ENCODE measurements at regions of chr6 and their contacts with region 1.

Region 1: DNA sequence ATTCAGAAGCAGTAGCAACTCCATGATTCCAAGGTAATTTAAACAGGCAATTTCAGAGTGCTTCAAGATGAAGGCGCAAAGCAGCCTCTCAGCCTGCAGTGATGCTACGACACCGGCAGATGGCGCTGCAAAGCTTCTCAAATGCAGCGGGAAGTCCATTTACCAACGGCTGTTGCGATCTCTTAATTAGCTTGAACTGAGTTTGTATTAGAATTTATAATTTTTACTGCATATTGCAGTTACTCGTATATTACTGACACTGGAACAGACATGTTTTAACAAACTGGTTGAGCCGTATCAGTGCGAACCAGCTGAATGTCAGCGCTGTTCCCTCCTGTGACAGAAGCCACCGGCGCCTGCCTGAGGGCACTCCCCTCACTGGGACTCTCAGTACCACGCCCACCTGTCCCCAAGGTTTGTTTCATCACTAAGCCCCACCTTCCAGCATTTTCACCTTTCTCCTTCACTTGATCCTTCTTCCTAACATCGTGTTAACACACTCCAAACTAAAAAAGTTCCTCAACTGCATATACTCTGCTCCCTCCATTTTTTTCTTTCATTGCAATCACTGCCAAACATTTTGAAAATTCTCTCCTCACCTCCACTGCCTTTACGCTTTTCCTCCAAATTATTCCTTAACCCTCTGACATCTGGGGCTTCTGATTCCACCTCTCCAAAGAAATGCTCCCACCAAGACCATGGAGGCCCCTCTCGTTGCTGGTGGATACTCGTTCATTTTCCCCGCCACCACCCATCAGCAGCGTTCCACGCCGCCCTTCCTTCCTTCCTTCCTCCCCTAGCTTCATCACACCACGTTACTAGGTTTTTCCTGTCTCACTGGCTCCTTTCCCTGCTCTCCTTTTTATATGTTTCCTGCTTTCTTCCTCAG is 14.5 kb downstream of the GNL1 start:
- DNase-seq: peak; percentile 87
- H3K4me3 Mint-ChIP-seq: peak overlapping the region; percentile 78
- H3K27ac Mint-ChIP-seq: peak overlapping the region; percentile 93
- H3K4me1 Mint-ChIP-seq: peaks cover 37% of the 10 kb centered on the region
- H3K27me3 Mint-ChIP-seq: no peaks in the 10 kb centered on the region

Region 2: DNA sequence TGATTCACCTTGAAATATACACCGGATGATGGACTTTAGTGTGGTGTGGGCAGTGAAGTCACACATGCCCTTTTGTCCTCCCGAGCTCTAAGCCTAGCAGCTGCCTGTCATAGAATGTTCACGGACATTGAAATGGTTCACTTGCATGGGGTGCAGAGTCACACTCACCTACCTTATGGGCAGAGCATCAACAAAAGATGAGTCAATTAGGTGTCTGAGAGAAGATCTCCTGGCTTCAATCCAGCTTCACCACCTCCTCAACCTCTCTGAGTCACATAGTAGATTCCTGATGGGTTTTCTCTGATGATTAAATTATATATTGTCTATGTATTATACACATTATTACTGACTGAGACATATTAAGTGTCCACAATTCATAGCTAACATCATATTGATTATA is 100.6 kb before region 1 on chr6:
- CTCF ChIA-PET with region 1: no interaction called
- DNase-seq: no peak
- H3K4me3 Mint-ChIP-seq: no peak overlapping the region
- H3K27ac Mint-ChIP-seq: no peak overlapping the region
- H3K4me1 Mint-ChIP-seq: no peaks in the 10 kb centered on the region
- H3K27me3 Mint-ChIP-seq: peaks cover 91% of the 10 kb centered on the region

Region 3: GRCh38 chr6:30453508-30454116 is 88.1 kb before region 1 on chr6:
- CTCF ChIA-PET with region 1: interaction called, 12 read pairs
- DNase-seq: peak; percentile 89
- H3K4me3 Mint-ChIP-seq: no peak overlapping the region
- H3K27ac Mint-ChIP-seq: no peak overlapping the region
- H3K4me1 Mint-ChIP-seq: peaks cover 34% of the 10 kb centered on the region
- H3K27me3 Mint-ChIP-seq: peaks cover 96% of the 10 kb centered on the region

Region 4: GRCh38 chr6:30483677-30484279 is 58.0 kb before region 1 on chr6:
- CTCF ChIA-PET with region 1: interaction called, 251 read pairs
- DNase-seq: no peak
- H3K4me3 Mint-ChIP-seq: no peak overlapping the region
- H3K27ac Mint-ChIP-seq: no peak overlapping the region
- H3K4me1 Mint-ChIP-seq: peaks cover 51% of the 10 kb centered on the region
- H3K27me3 Mint-ChIP-seq: peaks cover 60% of the 10 kb centered on the region

Region 5: DNA sequence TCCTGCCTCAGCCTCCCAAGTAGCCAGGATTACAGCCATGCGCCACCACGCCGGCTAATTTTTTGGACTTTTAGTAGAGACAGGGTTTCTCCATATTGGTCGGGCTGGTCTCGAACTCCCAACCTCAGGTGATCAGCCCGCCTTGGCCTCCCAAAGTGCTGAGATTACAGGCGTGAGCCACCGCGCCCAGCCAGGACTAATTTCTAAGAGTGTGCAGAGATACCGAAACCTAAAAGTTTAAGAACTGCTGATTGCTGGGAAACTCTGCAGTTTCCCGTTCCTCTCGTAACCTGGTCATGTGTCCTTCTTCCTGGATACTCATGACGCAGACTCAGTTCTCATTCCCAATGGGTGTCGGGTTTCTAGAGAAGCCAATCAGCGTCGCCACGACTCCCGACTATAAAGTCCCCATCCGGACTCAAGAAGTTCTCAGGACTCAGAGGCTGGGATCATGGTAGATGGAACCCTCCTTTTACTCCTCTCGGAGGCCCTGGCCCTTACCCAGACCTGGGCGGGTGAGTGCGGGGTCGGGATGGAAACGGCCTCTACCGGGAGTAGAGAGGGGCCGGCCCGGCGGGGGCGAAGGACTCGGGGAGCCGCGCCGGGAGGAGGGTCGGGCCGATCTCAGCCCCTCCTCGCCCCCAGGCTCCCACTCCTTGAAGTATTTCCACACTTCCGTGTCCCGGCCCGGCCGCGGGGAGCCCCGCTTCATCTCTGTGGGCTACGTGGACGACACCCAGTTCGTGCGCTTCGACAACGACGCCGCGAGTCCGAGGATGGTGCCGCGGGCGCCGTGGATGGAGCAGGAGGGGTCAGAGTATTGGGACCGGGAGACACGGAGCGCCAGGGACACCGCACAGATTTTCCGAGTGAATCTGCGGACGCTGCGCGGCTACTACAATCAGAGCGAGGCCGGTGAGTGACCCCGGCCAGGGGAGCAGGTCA is 52.4 kb before region 1 on chr6 and contains the start of gene HLA-E:
- CTCF ChIA-PET with region 1: interaction called, 251 read pairs
- DNase-seq: peak; percentile 94
- H3K4me3 Mint-ChIP-seq: peak within 1 kb of the TSS; percentile 99
- H3K27ac Mint-ChIP-seq: peak within 1 kb of the TSS; percentile 100
- H3K4me1 Mint-ChIP-seq: peaks cover 49% of the 10 kb centered on the region
- H3K27me3 Mint-ChIP-seq: peaks cover 19% of the 10 kb centered on the region

Region 6: DNA sequence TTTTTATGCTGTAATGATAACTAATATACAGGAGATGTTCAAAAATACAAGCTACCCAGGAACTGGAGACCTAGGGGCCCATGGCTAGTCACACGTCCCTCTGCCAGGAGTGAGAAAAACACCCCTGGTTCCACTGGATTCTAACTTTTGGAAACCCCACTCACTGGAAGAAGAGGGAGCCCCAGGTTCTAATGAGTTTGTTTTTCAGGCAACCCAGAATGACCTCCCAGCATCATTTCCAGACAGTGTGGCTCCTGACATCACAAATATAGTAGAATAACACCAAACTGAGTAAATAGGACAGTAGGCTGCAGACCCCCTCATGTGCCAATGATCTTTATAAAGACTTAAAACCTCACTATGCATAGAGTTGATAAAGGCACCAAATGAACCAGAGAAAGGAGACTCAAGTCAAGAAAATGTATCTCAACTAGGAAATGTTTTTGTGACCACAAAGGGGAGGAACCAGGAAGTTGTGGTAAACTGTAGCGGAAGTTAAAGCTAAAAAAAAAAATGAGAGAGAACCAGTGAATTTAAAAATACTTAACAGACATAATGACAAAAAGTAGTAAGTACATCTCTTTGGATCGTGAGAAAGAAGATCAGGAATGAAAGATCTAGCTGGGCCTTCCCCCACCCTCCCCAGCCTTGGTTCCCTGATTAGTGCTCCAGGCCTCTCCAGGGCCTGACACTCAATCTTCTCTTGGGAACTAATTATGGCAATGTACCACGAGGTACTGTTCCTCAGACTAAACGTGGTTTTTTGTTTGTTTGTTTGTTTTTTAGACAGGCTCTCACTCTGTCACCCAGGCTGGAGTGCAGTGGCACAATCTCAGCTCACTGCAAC is 32.6 kb before region 1 on chr6:
- CTCF ChIA-PET with region 1: interaction called, 10 read pairs
- DNase-seq: peak; percentile 41
- H3K4me3 Mint-ChIP-seq: peak overlapping the region; percentile 49
- H3K27ac Mint-ChIP-seq: peak overlapping the region; percentile 91
- H3K4me1 Mint-ChIP-seq: peaks cover 66% of the 10 kb centered on the region
- H3K27me3 Mint-ChIP-seq: no peaks in the 10 kb centered on the region

Region 7: GRCh38 chr6:30556066-30556905 is 14.5 kb after region 1 on chr6 and contains the start of gene GNL1:
- CTCF ChIA-PET with region 1: interaction called, 60 read pairs
- DNase-seq: peak; percentile 99
- H3K4me3 Mint-ChIP-seq: peak within 1 kb of the TSS; percentile 97
- H3K27ac Mint-ChIP-seq: peak within 1 kb of the TSS; percentile 100
- H3K4me1 Mint-ChIP-seq: peaks cover 42% of the 10 kb centered on the region
- H3K27me3 Mint-ChIP-seq: no peaks in the 10 kb centered on the region

Region 8: GRCh38 chr6:30600451-30600961 is 58.7 kb after region 1 on chr6:
- CTCF ChIA-PET with region 1: interaction called, 30 read pairs
- DNase-seq: no peak
- H3K4me3 Mint-ChIP-seq: no peak overlapping the region
- H3K27ac Mint-ChIP-seq: peak overlapping the region; percentile 33
- H3K4me1 Mint-ChIP-seq: peaks cover 23% of the 10 kb centered on the region
- H3K27me3 Mint-ChIP-seq: no peaks in the 10 kb centered on the region